Activated naive CD4-positive, alpha-beta T cell treated with anti-CD3 and anti-CD28 coated beads for 36 hours (primary cell): ENCODE measurements at regions of chr19 and their contacts with region 1.

Region 1: GRCh38 chr19:12294249-12295158 is at the start of gene ZNF44:
- DNase-seq: peak; percentile 99
- H3K4me3 Mint-ChIP-seq: peak within 1 kb of the TSS; percentile 98
- H3K27ac Mint-ChIP-seq: peak within 1 kb of the TSS; percentile 96
- H3K4me1 Mint-ChIP-seq: peaks cover 31% of the 10 kb centered on the region
- H3K27me3 Mint-ChIP-seq: no peaks in the 10 kb centered on the region
- total RNA-seq, gene ZNF44: 5.9 to 6.3 TPM

Region 2: GRCh38 chr19:12162882-12163806 is 131.4 kb before region 1 on chr19 and contains the start of gene ZNF136:
- CTCF ChIA-PET with region 1: no interaction called
- intact Hi-C with region 1: loop called (anchors 1 kb)
- DNase-seq: peak; percentile 99
- H3K4me3 Mint-ChIP-seq: peak within 1 kb of the TSS; percentile 90
- H3K27ac Mint-ChIP-seq: peak within 1 kb of the TSS; percentile 91
- H3K4me1 Mint-ChIP-seq: peaks cover 42% of the 10 kb centered on the region
- H3K27me3 Mint-ChIP-seq: no peaks in the 10 kb centered on the region
- total RNA-seq, gene ZNF136: 8.4 to 11.6 TPM

Region 3: GRCh38 chr19:12278713-12279112 is 15.8 kb before region 1 on chr19:
- CTCF ChIA-PET with region 1: no interaction called
- intact Hi-C with region 1: no loop called
- DNase-seq: no peak
- H3K4me3 Mint-ChIP-seq: no peak overlapping the region
- H3K27ac Mint-ChIP-seq: no peak overlapping the region
- H3K4me1 Mint-ChIP-seq: peaks cover 30% of the 10 kb centered on the region
- H3K27me3 Mint-ChIP-seq: no peaks in the 10 kb centered on the region

Region 4: GRCh38 chr19:12365236-12366162 is 71.0 kb after region 1 on chr19 and contains the start of gene ZNF442:
- CTCF ChIA-PET with region 1: no interaction called
- intact Hi-C with region 1: loop called (anchors 1 kb)
- DNase-seq: peak; percentile 96
- H3K4me3 Mint-ChIP-seq: peak within 1 kb of the TSS; percentile 85
- H3K27ac Mint-ChIP-seq: peak within 1 kb of the TSS; percentile 41
- H3K4me1 Mint-ChIP-seq: peaks cover 18% of the 10 kb centered on the region
- H3K27me3 Mint-ChIP-seq: no peaks in the 10 kb centered on the region
- total RNA-seq, gene ZNF442: 1.7 to 2.4 TPM

Region 5: DNA sequence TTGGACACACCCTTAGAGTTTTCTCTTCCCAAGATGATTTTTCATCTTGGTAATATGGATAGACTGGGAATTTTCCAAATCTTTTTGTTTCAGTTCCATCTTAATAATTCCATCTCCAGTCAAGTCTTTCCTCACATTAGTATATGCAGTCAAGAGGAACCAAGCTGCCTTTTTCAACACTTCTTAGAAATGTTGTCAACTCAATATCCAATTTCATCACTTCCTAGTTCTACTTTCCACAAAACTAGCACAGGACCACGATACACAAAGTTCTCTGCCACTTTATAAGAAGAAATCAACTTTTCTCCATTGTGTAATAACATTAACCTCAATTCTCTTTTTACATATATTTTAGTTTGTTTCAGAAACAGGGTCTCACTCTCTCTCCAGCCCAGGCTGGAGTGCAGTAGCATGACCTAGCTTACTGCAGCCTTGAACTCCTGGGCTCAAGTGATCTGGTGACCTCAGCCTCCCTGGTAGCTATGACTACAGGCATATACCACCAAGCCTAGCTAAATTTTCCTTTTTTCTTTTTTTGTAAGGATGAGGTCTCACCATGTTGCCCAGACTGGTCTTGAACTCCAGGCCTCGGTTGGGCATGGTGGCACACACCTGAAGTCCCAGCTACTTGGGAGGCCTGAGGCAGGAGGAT is 130.9 kb after region 1 on chr19:
- CTCF ChIA-PET with region 1: no interaction called
- intact Hi-C with region 1: no loop called
- DNase-seq: no peak
- H3K4me3 Mint-ChIP-seq: no peak overlapping the region
- H3K27ac Mint-ChIP-seq: no peak overlapping the region
- H3K4me1 Mint-ChIP-seq: no peaks in the 10 kb centered on the region
- H3K27me3 Mint-ChIP-seq: no peaks in the 10 kb centered on the region